ENCODE measurements at regions of chr2 and their contacts with region 1.

Region 1: GRCh38 chr2:157327621-157328500 is 2.2 kb upstream of the ERMN start:
- DNase-seq: peak; percentile 74
- ATAC-seq: peak; percentile 99
- H3K4me3 ChIP-seq: no peak overlapping the region
- H3K27ac ChIP-seq: no peak overlapping the region
- H3K4me1 ChIP-seq: no peaks in the 10 kb centered on the region
- H3K27me3 ChIP-seq: no peaks in the 10 kb centered on the region; the same call in 1 of the 2 replicates
- CTCF ChIP-seq: peak; percentile 78
- POLR2A ChIP-seq: no peak
- RAD21 ChIP-seq: peak; percentile 59

Region 2: GRCh38 chr2:155377266-155377680 is 1950.6 kb before region 1 on chr2:
- CTCF ChIA-PET with region 1: no interaction called
- POLR2A ChIA-PET with region 1: no interaction called
- dilution Hi-C with region 1: no loop called
- in situ Hi-C with region 1: loop called (anchors 25 kb)
- intact Hi-C with region 1: no loop called
- DNase-seq: peak; percentile 35
- ATAC-seq: no peak
- H3K4me3 ChIP-seq: no peak overlapping the region
- H3K27ac ChIP-seq: no peak overlapping the region
- H3K4me1 ChIP-seq: no peaks in the 10 kb centered on the region
- H3K27me3 ChIP-seq: no peaks in the 10 kb centered on the region
- CTCF ChIP-seq: peak; percentile 43
- POLR2A ChIP-seq: no peak
- RAD21 ChIP-seq: peak; percentile 46

Region 3: GRCh38 chr2:155519529-155520130 is 1808.2 kb before region 1 on chr2:
- CTCF ChIA-PET with region 1: no interaction called
- POLR2A ChIA-PET with region 1: no interaction called
- dilution Hi-C with region 1: no loop called
- in situ Hi-C with region 1: no loop called
- intact Hi-C with region 1: no loop called
- DNase-seq: no peak
- ATAC-seq: no peak
- H3K4me3 ChIP-seq: no peak overlapping the region
- H3K27ac ChIP-seq: no peak overlapping the region
- H3K4me1 ChIP-seq: no peaks in the 10 kb centered on the region
- H3K27me3 ChIP-seq: no peaks in the 10 kb centered on the region
- CTCF ChIP-seq: no peak
- POLR2A ChIP-seq: no peak
- RAD21 ChIP-seq: no peak

Region 4: DNA sequence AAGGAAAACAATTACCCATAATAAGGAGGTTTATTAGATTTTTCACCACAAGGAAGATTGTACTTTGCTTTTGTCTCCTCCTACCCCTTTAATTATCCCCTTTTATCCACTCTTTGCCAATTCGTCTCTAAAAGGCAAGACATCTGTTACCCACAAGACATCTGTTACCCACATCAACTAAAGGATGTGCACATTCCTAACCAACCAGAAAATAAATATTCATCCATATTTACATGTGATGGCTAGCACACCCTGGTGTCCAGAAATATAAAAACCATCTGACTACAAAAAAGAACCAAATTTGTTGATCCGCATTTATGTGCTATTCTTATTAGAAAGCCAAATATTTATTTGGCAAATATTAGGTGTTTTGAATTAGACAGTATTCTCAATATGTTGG is 265.1 kb after region 1 on chr2:
- CTCF ChIA-PET with region 1: no interaction called
- POLR2A ChIA-PET with region 1: no interaction called
- dilution Hi-C with region 1: no loop called
- in situ Hi-C with region 1: no loop called
- intact Hi-C with region 1: loop called (anchors 5 kb)
- DNase-seq: peak; percentile 8
- ATAC-seq: peak; percentile 42; the same call in 1 of the 2 replicates
- H3K4me3 ChIP-seq: no peak overlapping the region
- H3K27ac ChIP-seq: no peak overlapping the region
- H3K4me1 ChIP-seq: no peaks in the 10 kb centered on the region
- H3K27me3 ChIP-seq: peaks cover 7% of the 10 kb centered on the region
- CTCF ChIP-seq: peak; percentile 25; the same call in 1 of the 2 replicates
- POLR2A ChIP-seq: no peak
- RAD21 ChIP-seq: no peak